ENCODE measurements at regions of chr1 and their contacts with region 1.

Region 1: GRCh38 chr1:245156081-245156735 is 1.4 kb downstream of the KIF26B start:
- DNase-seq: peak; percentile 88
- ATAC-seq: peak; percentile 88

Region 2: GRCh38 chr1:245121513-245121912 is 34.7 kb before region 1 on chr1:
- intact Hi-C with region 1: no loop called
- DNase-seq: no peak
- ATAC-seq: no peak

Region 3: GRCh38 chr1:245771511-245772281 is 615.5 kb after region 1 on chr1:
- intact Hi-C with region 1: no loop called
- DNase-seq: no peak
- ATAC-seq: peak; percentile 89

Region 4: GRCh38 chr1:245807306-245807705 is 651.1 kb after region 1 on chr1:
- intact Hi-C with region 1: loop called (anchors 10 kb)
- DNase-seq: no peak
- ATAC-seq: no peak

Region 5: GRCh38 chr1:246117066-246117791 is 961.0 kb after region 1 on chr1:
- intact Hi-C with region 1: loop called (anchors 2 kb)
- DNase-seq: no peak
- ATAC-seq: peak; percentile 56

Region 6: DNA sequence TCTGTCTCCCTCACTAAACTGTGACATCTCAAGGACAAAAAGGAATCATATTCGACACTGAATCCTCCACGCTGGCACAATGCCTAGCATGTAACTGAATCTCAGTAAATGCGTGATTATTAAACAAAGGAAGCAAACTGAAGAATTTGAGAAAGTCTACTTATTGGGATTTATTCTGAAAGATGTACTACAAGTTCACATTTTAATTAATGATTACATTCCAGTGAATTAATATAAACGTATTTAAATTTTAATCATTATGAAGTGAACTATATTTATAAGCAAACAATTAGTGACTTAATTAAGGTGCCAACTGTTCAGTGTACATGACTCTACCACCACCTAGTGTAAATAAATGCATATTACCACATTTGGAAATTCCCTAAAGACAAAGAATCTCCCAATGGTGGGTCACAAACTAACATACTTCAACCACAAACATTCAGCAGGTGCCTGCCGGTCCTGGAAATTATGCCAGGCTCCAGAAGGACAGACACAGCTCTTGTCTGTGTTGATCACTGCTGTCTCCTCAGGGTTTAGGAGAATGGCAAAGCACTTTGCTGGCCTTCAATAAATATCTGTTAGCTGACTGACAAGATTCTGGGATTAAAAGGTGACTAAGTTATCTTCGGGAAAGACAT is 1294.5 kb after region 1 on chr1:
- intact Hi-C with region 1: loop called (anchors 5 kb)
- DNase-seq: no peak
- ATAC-seq: peak; percentile 56

Measured in Right ventricle myocardium inferior (tissue), 1 donor.